ENCODE measurements at regions of chr20 and their contacts with region 1.

Region 1: DNA sequence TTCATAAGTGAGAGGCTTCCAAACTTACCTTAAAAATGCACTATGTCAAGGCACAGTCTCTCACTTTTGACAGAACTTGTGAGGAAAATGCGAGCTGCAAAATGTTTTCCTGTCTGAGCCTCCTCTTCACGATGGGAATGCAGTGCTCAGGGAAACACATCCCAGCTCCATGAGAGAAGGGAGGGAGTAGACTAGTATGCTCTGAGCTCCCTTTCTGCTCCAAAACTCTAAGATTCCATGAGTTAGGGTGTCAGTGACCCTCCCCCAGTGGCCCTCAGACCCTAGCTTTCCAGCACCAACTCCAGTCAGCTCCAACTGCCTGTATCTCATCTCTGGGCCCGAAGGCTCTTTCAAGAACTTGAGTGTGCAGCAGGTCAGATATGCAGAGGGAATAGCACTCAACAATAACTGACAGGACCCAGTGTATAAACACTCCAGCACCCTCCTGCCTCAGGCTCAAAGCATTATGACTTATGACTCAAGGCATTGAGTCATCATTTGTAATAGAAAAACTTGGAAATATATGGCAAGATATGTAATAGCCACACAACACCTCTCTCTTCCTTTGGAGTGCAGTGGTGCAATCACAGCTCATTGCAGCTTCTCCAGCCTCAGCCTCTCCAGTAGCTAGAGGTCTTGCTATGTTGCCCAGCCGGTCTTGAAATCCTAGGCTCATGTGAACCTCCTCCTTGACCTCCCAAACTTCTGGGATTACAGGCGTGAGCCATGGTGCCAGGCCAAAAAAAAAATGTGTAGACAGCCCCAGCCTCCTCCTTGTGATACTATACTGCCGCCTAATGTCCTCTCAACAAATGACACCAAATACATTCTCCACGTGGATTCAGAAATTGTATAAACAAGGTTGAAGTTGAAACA is 16.7 kb upstream of the ENTPD6 start:
- DNase-seq: peak; percentile 97
- H3K4me3 ChIP-seq: no peak overlapping the region
- H3K27ac ChIP-seq: peak overlapping the region; percentile 12
- H3K4me1 ChIP-seq: peaks cover 26% of the 10 kb centered on the region
- H3K27me3 ChIP-seq: no peaks in the 10 kb centered on the region
- CTCF ChIP-seq: peak; percentile 93 to 97

Region 2: GRCh38 chr20:24934101-24934661 is 244.6 kb before region 1 on chr20:
- CTCF ChIA-PET with region 1: no interaction called
- dilution Hi-C with region 1: no loop called
- in situ Hi-C with region 1: no loop called
- intact Hi-C with region 1: loop called (anchors 5 kb)
- DNase-seq: no peak
- H3K4me3 ChIP-seq: no peak overlapping the region
- H3K27ac ChIP-seq: no peak overlapping the region
- H3K4me1 ChIP-seq: peaks cover 26% of the 10 kb centered on the region
- H3K27me3 ChIP-seq: no peaks in the 10 kb centered on the region
- CTCF ChIP-seq: no peak

Region 3: GRCh38 chr20:25017257-25018115 is 161.3 kb before region 1 on chr20:
- CTCF ChIA-PET with region 1: no interaction called
- dilution Hi-C with region 1: loop called (anchors 10 kb)
- in situ Hi-C with region 1: no loop called
- intact Hi-C with region 1: no loop called
- DNase-seq: peak; percentile 87
- H3K4me3 ChIP-seq: no peak overlapping the region
- H3K27ac ChIP-seq: no peak overlapping the region
- H3K4me1 ChIP-seq: peaks cover 15% of the 10 kb centered on the region
- H3K27me3 ChIP-seq: no peaks in the 10 kb centered on the region
- CTCF ChIP-seq: peak in 1 of 2 donors; percentile 20

Region 4: DNA sequence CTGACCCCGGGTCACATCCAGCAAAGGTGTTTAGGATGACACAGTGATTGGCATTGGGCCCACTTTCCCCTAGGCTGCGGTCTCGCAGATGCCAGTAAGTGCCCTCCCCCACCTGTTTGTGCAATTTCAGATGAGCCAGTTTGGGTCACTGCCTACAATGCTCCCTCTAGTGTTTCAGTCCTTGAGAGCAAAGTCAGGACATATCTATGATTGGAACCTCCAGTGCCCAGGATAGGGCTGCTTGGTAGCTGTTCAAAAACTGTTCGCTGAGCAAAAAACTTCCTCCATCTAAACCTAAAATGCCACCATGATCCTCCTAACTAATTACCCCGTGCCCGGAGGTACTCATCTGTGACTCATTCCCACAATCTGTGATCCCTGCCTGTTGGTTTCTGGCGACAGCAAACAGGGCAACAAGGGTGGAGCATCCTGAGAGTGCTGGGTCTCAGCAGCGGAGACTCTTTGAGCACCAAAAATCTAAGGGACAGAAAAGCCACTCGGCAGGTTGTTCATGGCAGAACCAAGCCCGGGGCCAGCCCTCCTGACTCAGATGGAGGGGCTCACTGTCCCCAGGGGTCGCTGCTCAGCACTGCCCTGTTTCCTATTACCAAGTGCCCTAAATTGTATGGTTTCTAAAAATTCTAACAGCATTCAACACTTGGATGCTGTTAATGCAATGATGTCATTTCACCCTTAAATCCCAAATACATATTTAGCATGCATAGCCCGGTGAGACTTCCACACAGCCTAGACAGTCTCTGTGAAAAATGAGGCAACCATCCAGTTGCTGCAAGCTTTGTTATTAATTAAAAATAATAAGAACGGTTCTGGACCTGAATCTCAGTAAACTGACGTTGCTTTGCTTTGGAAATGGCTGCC is 101.8 kb before region 1 on chr20:
- CTCF ChIA-PET with region 1: no interaction called
- dilution Hi-C with region 1: no loop called
- in situ Hi-C with region 1: loop called (anchors 10 kb)
- intact Hi-C with region 1: no loop called
- DNase-seq: peak; percentile 65
- H3K4me3 ChIP-seq: peak overlapping the region in 1 of 3 experiments; percentile 8
- H3K27ac ChIP-seq: no peak overlapping the region
- H3K4me1 ChIP-seq: peaks cover 25% of the 10 kb centered on the region
- H3K27me3 ChIP-seq: peaks cover 17% of the 10 kb centered on the region
- CTCF ChIP-seq: peak; percentile 30 to 58

Region 5: DNA sequence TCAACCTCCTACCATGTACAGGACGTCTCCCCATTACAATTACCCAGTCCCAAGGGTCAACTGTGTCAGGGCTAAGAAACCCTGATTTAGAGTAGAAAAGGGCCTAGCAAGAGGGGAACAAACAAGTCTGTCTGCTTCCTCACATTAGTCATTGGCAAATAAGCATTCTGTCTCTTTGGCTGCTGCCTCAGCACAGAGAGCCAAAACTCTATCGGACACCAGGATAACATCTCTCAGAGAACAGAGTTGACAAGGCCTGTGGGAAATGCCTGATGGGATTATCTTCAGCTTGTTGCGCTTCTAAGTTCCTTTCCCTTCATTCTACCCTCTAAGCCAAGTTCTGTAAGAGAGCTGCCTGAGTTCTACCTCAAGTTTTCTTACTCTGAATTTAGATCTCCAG is 77.9 kb before region 1 on chr20:
- CTCF ChIA-PET with region 1: no interaction called
- dilution Hi-C with region 1: no loop called
- in situ Hi-C with region 1: no loop called
- intact Hi-C with region 1: no loop called
- DNase-seq: no peak
- H3K4me3 ChIP-seq: no peak overlapping the region
- H3K27ac ChIP-seq: no peak overlapping the region
- H3K4me1 ChIP-seq: no peaks in the 10 kb centered on the region
- H3K27me3 ChIP-seq: peaks cover 2% of the 10 kb centered on the region
- CTCF ChIP-seq: no peak

Region 6: DNA sequence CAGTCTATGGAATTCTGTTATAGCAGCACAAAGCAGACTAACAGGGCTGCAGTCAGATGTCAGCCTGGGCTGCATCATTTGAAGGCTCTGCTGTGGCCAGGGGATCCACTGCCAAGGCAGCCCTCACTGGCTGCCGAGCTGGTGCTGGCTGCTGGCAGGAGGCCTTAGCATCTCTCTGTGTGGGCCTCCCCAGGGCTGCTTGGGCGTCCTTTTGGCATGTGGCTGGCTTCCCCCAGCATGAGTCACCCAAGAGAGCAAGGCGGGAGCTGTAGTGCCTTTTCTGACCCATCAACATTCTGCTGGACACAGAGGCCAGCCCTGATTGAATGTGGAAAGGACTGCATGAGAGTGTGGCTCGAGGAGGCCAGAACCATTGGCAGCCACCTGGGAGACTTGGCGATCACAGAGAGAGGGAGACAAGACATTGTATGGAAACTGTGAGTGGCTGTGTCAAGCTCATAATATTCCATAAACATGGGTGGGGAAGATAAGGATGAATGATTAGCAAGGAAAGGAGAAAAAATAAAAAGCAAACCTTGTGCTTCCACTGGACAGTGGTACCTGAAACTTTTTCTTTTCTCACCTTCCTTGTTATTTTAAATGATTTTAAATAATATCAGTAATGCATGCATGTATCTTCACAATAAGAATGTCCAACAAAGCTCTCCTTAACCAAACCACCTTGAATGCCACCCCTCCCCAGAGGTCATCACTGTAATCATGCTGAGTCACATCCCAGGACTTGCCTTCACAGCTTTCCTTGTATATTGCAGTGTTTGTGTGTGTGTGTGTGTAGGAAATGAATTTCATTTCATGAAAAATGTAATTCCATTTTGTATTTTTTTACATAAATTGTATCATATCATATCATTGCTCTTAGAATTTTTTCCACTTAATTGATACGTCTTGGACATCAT is 41.9 kb before region 1 on chr20:
- CTCF ChIA-PET with region 1: no interaction called
- dilution Hi-C with region 1: no loop called
- in situ Hi-C with region 1: no loop called
- intact Hi-C with region 1: loop called (anchors 1 kb)
- DNase-seq: peak; percentile 77
- H3K4me3 ChIP-seq: no peak overlapping the region
- H3K27ac ChIP-seq: no peak overlapping the region
- H3K4me1 ChIP-seq: peaks cover 15% of the 10 kb centered on the region
- H3K27me3 ChIP-seq: no peaks in the 10 kb centered on the region
- CTCF ChIP-seq: no peak

Region 7: GRCh38 chr20:25247956-25248785 is 69.4 kb after region 1 on chr20 and contains the start of gene PYGB:
- CTCF ChIA-PET with region 1: no interaction called
- dilution Hi-C with region 1: no loop called
- in situ Hi-C with region 1: no loop called
- intact Hi-C with region 1: loop called (anchors 1 kb)
- DNase-seq: peak; percentile 89
- H3K4me3 ChIP-seq: peak within 1 kb of the TSS; percentile 91 to 98 (median 97)
- H3K27ac ChIP-seq: peak within 1 kb of the TSS; percentile 79
- H3K4me1 ChIP-seq: peaks cover 42% of the 10 kb centered on the region
- H3K27me3 ChIP-seq: no peaks in the 10 kb centered on the region
- CTCF ChIP-seq: no peak
- total RNA-seq, gene PYGB: 475 to 1,432 TPM

Region 8: GRCh38 chr20:25848222-25848621 is 669.4 kb after region 1 on chr20:
- CTCF ChIA-PET with region 1: no interaction called
- dilution Hi-C with region 1: no loop called
- in situ Hi-C with region 1: no loop called
- intact Hi-C with region 1: no loop called
- DNase-seq: no peak
- H3K4me3 ChIP-seq: no peak overlapping the region
- H3K27ac ChIP-seq: no peak overlapping the region
- H3K4me1 ChIP-seq: no peaks in the 10 kb centered on the region
- H3K27me3 ChIP-seq: no peaks in the 10 kb centered on the region
- CTCF ChIP-seq: no peak

Measured in mammary epithelial cell (primary cell).